ENCODE measurements at regions of chr2 and their contacts with region 1.

Region 1: GRCh38 chr2:38377050-38377828 is at the start of gene ATL2:
- DNase-seq: peak; percentile 96 to 98
- ATAC-seq: peak; percentile 90 to 93 (median 92)
- H3K4me3 ChIP-seq: peak within 1 kb of the TSS; percentile 96
- H3K27ac ChIP-seq: peak within 1 kb of the TSS; percentile 99
- H3K4me1 ChIP-seq: peaks cover 31% of the 10 kb centered on the region
- H3K27me3 ChIP-seq: no peaks in the 10 kb centered on the region
- CTCF ChIP-seq: no peak
- total RNA-seq, gene ATL2: 51.9 to 98.9 (median 61.5) TPM

Region 2: DNA sequence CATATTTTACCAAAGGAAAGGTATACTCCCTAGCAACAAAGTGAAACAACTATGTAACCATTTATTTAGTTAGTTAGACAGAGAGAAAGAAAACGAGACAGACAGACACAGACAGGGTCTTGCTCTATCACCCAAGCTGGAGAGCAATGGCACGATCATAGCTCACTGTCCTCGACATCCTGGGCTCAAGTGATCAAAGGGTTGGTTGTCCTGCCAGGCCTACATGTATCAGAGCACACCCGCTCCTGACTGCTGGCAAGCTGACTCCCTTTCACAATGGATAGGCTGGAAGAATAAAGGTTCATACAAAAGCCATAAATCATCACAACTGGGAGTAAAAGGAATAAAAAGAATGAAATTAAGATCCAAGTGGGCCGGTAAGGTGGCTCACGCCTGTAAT is 53.6 kb before region 1 on chr2:
- intact Hi-C with region 1: loop called in 1 of 2 experiments (anchors 10 kb)
- DNase-seq: no peak
- ATAC-seq: peak in 1 of 4 donors; percentile 41
- H3K4me3 ChIP-seq: no peak overlapping the region
- H3K27ac ChIP-seq: no peak overlapping the region
- H3K4me1 ChIP-seq: peaks cover 18% of the 10 kb centered on the region
- H3K27me3 ChIP-seq: no peaks in the 10 kb centered on the region
- CTCF ChIP-seq: no peak

Region 3: GRCh38 chr2:38474715-38475566 is 97.7 kb after region 1 on chr2:
- intact Hi-C with region 1: loop called in 1 of 2 experiments (anchors 5 kb)
- DNase-seq: no peak
- ATAC-seq: peak; percentile 53 to 79 (median 63)
- H3K4me3 ChIP-seq: no peak overlapping the region
- H3K27ac ChIP-seq: peak overlapping the region; percentile 63
- H3K4me1 ChIP-seq: peaks cover 19% of the 10 kb centered on the region
- H3K27me3 ChIP-seq: no peaks in the 10 kb centered on the region
- CTCF ChIP-seq: no peak

Region 4: DNA sequence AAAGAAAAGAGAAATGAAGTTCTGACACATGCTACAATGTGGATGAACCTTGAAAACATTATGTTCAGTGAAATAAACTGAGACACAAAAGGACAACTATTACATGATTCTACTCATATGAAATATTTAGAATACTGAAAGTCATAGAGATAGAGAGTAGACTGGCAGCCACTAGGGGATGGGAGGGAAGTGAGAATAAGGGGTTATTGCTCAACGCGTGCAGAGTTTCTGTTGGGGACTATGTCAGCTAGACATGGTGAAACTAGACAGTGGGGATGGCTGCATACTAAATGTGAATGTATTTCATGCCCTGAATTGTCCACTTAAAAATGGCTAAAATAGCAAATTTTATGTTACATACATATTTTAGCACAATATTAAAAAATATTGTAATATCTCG is 108.5 kb after region 1 on chr2:
- intact Hi-C with region 1: loop called in 1 of 2 experiments (anchors 5 kb)
- DNase-seq: no peak
- ATAC-seq: peak; percentile 59 to 83 (median 73)
- H3K4me3 ChIP-seq: no peak overlapping the region
- H3K27ac ChIP-seq: peak overlapping the region; percentile 62
- H3K4me1 ChIP-seq: peaks cover 40% of the 10 kb centered on the region
- H3K27me3 ChIP-seq: no peaks in the 10 kb centered on the region
- CTCF ChIP-seq: peak; percentile 7

Region 5: GRCh38 chr2:38508311-38509039 is 131.2 kb after region 1 on chr2:
- intact Hi-C with region 1: loop called in 1 of 2 experiments (anchors 10 kb)
- DNase-seq: peak; percentile 89 to 92
- ATAC-seq: peak; percentile 8 to 53 (median 42)
- H3K4me3 ChIP-seq: no peak overlapping the region
- H3K27ac ChIP-seq: peak overlapping the region; percentile 65
- H3K4me1 ChIP-seq: peaks cover 43% of the 10 kb centered on the region
- H3K27me3 ChIP-seq: no peaks in the 10 kb centered on the region
- CTCF ChIP-seq: peak; percentile 15

Region 6: DNA sequence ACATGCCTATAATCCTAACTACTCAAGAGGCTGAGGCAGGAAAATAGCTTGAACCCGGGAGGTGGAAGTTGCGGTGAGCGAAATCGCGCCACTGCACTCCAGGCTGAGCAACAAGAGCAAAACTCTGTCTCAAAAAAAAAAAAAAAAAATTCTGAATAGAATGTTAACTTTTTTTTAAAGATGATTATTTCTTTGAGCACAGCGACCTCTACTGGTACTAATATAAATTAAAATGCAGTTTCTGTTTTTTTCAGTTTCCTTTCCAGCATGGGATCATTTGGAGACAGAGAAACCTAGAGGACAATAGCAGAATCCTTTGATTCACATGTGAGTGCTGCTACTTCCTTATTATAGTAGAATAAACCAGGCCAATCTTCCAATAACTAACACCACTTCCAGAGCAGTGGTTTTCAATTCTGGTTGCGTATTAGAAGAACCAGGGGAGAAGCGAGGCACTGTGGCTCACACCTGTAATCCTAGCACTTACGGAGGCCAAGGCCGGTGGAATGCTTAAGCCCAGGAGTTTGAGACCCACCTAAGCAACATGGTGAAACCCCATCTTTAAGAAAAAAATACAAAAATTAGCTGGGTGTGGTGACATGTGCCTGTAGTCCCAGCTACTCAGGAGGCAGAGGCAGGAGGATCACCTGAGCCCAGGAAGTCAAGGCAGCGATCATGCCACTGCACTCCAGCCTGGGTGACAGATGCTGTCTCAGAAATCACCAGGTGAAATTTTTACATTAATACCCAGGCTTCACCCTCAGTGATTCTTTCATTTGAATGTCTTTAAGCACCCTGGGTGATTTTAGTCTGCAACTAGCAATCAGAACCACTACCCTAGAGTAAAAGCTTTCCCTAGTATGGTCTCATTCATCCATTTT is 363.9 kb after region 1 on chr2:
- intact Hi-C with region 1: loop called in 1 of 2 experiments (anchors 10 kb)
- DNase-seq: peak in 1 of 2 donors; percentile 32
- ATAC-seq: peak; percentile 24 to 49 (median 32)
- H3K4me3 ChIP-seq: no peak overlapping the region
- H3K27ac ChIP-seq: no peak overlapping the region
- H3K4me1 ChIP-seq: peaks cover 21% of the 10 kb centered on the region
- H3K27me3 ChIP-seq: no peaks in the 10 kb centered on the region
- CTCF ChIP-seq: peak; percentile 72

Region 7: GRCh38 chr2:39033980-39034379 is 656.7 kb after region 1 on chr2:
- intact Hi-C with region 1: no loop called
- DNase-seq: no peak
- ATAC-seq: no peak
- H3K4me3 ChIP-seq: no peak overlapping the region
- H3K27ac ChIP-seq: no peak overlapping the region
- H3K4me1 ChIP-seq: no peaks in the 10 kb centered on the region
- H3K27me3 ChIP-seq: no peaks in the 10 kb centered on the region
- CTCF ChIP-seq: no peak

Measured in psoas muscle (tissue), 8 donors.